ENCODE measurements at regions of chr1 and their contacts with region 1.

Region 1: GRCh38 chr1:185595835-185596667 is 138.1 kb upstream of the HMCN1 start:
- DNase-seq: peak; percentile 84
- H3K4me3 Mint-ChIP-seq: no peak overlapping the region
- H3K27ac Mint-ChIP-seq: no peak overlapping the region
- H3K4me1 Mint-ChIP-seq: no peaks in the 10 kb centered on the region
- H3K27me3 Mint-ChIP-seq: no peaks in the 10 kb centered on the region
- CTCF ChIP-seq: peak; percentile 90

Region 2: GRCh38 chr1:185108321-185108720 is 487.7 kb before region 1 on chr1:
- CTCF ChIA-PET with region 1: no interaction called
- POLR2A ChIA-PET with region 1: no interaction called
- intact Hi-C with region 1: no loop called
- DNase-seq: no peak
- H3K4me3 Mint-ChIP-seq: no peak overlapping the region
- H3K27ac Mint-ChIP-seq: no peak overlapping the region
- H3K4me1 Mint-ChIP-seq: peaks cover 6% of the 10 kb centered on the region
- H3K27me3 Mint-ChIP-seq: no peaks in the 10 kb centered on the region
- CTCF ChIP-seq: no peak

Region 3: DNA sequence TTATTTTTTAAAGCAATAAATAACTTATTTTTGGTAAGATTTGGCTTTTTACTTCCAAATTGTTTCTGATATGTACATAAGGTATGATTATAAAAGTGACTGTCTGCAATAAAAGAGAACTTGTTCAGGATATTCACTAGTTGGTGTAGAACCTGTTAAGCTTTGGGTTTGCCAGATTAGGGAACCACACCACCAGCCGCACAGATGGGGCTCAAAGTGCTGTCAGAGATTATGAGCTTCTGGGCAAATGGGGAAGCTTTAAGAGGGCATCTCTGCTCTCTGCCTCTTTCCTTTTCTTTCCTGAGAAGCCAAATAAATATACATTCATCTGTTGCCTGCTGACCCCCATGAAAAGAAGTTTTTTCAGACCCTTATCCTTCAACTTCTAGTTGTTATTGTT is 304.4 kb before region 1 on chr1:
- CTCF ChIA-PET with region 1: interaction called, 12 read pairs
- POLR2A ChIA-PET with region 1: no interaction called
- intact Hi-C with region 1: no loop called
- DNase-seq: no peak
- H3K4me3 Mint-ChIP-seq: no peak overlapping the region
- H3K27ac Mint-ChIP-seq: no peak overlapping the region
- H3K4me1 Mint-ChIP-seq: no peaks in the 10 kb centered on the region
- H3K27me3 Mint-ChIP-seq: no peaks in the 10 kb centered on the region
- CTCF ChIP-seq: no peak

Region 4: GRCh38 chr1:185351734-185352466 is 244.2 kb before region 1 on chr1:
- CTCF ChIA-PET with region 1: interaction called, 24 read pairs
- POLR2A ChIA-PET with region 1: no interaction called
- intact Hi-C with region 1: no loop called
- DNase-seq: no peak
- H3K4me3 Mint-ChIP-seq: no peak overlapping the region
- H3K27ac Mint-ChIP-seq: no peak overlapping the region
- H3K4me1 Mint-ChIP-seq: peaks cover 29% of the 10 kb centered on the region
- H3K27me3 Mint-ChIP-seq: no peaks in the 10 kb centered on the region
- CTCF ChIP-seq: no peak

Region 5: GRCh38 chr1:185559684-185560331 is 36.2 kb before region 1 on chr1:
- CTCF ChIA-PET with region 1: interaction called, 25 read pairs
- POLR2A ChIA-PET with region 1: interaction called, 6 read pairs
- intact Hi-C with region 1: no loop called
- DNase-seq: peak; percentile 70
- H3K4me3 Mint-ChIP-seq: no peak overlapping the region
- H3K27ac Mint-ChIP-seq: no peak overlapping the region
- H3K4me1 Mint-ChIP-seq: peaks cover 16% of the 10 kb centered on the region
- H3K27me3 Mint-ChIP-seq: no peaks in the 10 kb centered on the region
- CTCF ChIP-seq: peak; percentile 51

Region 6: DNA sequence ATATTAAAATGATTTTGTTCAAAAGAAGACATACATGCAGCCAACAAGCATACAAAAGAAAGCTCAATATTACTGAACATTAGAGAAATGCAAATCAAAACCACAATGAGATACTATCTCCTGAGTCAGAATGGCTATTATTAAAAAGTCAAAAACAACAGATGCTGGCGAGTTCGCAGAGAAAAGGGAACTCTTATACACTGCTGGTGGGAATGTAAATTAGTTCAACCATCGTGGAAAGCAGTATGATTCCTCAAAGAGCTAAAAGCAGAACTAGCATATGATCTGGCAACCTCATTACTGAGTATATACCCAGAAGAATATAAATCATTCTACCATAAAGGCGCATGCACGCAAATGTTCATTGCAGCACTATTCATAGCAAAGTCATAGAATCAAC is 12.1 kb after region 1 on chr1:
- CTCF ChIA-PET with region 1: interaction called, 30 read pairs
- POLR2A ChIA-PET with region 1: no interaction called
- intact Hi-C with region 1: no loop called
- DNase-seq: no peak
- H3K4me3 Mint-ChIP-seq: no peak overlapping the region
- H3K27ac Mint-ChIP-seq: no peak overlapping the region
- H3K4me1 Mint-ChIP-seq: peaks cover 5% of the 10 kb centered on the region
- H3K27me3 Mint-ChIP-seq: no peaks in the 10 kb centered on the region
- CTCF ChIP-seq: no peak

Region 7: GRCh38 chr1:185652348-185652747 is 56.3 kb after region 1 on chr1:
- CTCF ChIA-PET with region 1: interaction called, 10 read pairs
- POLR2A ChIA-PET with region 1: interaction called, 3 read pairs
- intact Hi-C with region 1: no loop called
- DNase-seq: peak; percentile 28
- H3K4me3 Mint-ChIP-seq: no peak overlapping the region
- H3K27ac Mint-ChIP-seq: no peak overlapping the region
- H3K4me1 Mint-ChIP-seq: no peaks in the 10 kb centered on the region
- H3K27me3 Mint-ChIP-seq: no peaks in the 10 kb centered on the region
- CTCF ChIP-seq: peak; percentile 9

Measured in MCF 10A (cell line).